ENCODE measurements at regions of chr7 and their contacts with region 1.

Region 1: GRCh38 chr7:131945313-131945911 is 389.0 kb upstream of the PODXL start:
- DNase-seq: peak; percentile 15
- ATAC-seq: peak; percentile 96
- H3K4me3 ChIP-seq: no peak overlapping the region
- H3K27ac ChIP-seq: no peak overlapping the region
- H3K4me1 ChIP-seq: peaks cover 0 to 10% of the 10 kb centered on the region in 2 experiments; a peak in 1 of 4 replicates
- H3K27me3 ChIP-seq: peaks cover 43% of the 10 kb centered on the region
- CTCF ChIP-seq: peak; percentile 82 to 84 (median 84)
- POLR2A ChIP-seq: no peak
- RAD21 ChIP-seq: peak; percentile 92

Region 2: DNA sequence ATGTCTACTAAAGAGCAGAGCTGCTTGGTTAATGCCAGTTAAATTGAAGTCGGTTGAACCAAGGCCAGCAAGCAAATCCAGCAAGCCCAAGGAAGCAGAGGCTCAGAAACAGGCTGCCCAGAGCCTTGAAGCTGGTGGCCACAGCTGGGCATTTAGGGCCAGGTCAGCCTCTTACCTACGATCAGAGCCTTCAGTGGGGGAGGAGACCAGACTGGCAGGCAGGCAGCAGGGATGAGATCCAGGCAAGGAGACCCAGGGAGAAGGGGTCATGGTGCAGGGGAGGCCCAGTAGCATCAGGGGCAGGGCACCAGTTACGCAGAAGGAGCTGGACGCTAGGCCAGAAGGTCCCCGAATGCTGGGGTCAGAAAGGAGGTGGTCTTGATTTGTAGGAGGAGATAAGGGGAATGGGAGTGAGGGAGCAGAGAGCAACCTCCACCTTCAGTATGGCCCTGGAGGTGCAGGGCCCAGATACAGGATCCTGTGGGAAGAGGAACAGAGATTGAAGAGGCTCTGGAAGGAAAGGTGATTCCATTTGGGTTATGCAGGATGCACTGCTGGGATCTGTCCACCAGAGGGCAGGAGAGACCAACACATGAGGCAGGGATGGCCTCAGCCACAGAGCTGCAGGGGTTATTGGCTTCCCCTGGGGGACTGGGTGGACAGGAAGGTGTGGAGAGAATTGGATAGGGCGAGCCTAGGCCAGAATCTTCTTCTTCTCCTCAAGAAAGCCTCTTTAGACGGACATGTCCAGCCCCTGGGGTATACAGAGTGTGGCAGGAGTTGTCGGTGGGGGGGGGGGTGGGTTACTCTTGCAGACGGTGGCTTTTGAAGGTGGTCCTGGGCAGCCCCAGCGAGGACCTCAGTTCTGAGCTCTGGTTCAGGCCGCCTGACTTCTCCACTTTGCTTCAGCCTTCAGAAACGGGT is 256.4 kb before region 1 on chr7:
- CTCF ChIA-PET with region 1: interaction called, 6 read pairs
- POLR2A ChIA-PET with region 1: no interaction called
- RAD21 ChIA-PET with region 1: no interaction called
- intact Hi-C with region 1: loop called (anchors 2 kb)
- DNase-seq: peak; percentile 23
- ATAC-seq: peak; percentile 79
- H3K4me3 ChIP-seq: no peak overlapping the region
- H3K27ac ChIP-seq: no peak overlapping the region
- H3K4me1 ChIP-seq: peaks cover 0 to 8% of the 10 kb centered on the region in 2 experiments; a peak in 3 of 4 replicates
- H3K27me3 ChIP-seq: peaks cover 34% of the 10 kb centered on the region
- CTCF ChIP-seq: peak; percentile 78 to 98 (median 93); a peak in 5 of 6 replicates
- POLR2A ChIP-seq: no peak
- RAD21 ChIP-seq: peak; percentile 94

Region 3: GRCh38 chr7:131764143-131764775 is 181.2 kb before region 1 on chr7:
- CTCF ChIA-PET with region 1: no interaction called
- POLR2A ChIA-PET with region 1: no interaction called
- RAD21 ChIA-PET with region 1: no interaction called
- intact Hi-C with region 1: no loop called
- DNase-seq: no peak
- ATAC-seq: no peak
- H3K4me3 ChIP-seq: no peak overlapping the region
- H3K27ac ChIP-seq: no peak overlapping the region
- H3K4me1 ChIP-seq: peaks cover 0 to 4% of the 10 kb centered on the region in 2 experiments; a peak in 2 of 4 replicates
- H3K27me3 ChIP-seq: peaks cover 59% of the 10 kb centered on the region
- CTCF ChIP-seq: no peak
- POLR2A ChIP-seq: no peak
- RAD21 ChIP-seq: no peak

Region 4: DNA sequence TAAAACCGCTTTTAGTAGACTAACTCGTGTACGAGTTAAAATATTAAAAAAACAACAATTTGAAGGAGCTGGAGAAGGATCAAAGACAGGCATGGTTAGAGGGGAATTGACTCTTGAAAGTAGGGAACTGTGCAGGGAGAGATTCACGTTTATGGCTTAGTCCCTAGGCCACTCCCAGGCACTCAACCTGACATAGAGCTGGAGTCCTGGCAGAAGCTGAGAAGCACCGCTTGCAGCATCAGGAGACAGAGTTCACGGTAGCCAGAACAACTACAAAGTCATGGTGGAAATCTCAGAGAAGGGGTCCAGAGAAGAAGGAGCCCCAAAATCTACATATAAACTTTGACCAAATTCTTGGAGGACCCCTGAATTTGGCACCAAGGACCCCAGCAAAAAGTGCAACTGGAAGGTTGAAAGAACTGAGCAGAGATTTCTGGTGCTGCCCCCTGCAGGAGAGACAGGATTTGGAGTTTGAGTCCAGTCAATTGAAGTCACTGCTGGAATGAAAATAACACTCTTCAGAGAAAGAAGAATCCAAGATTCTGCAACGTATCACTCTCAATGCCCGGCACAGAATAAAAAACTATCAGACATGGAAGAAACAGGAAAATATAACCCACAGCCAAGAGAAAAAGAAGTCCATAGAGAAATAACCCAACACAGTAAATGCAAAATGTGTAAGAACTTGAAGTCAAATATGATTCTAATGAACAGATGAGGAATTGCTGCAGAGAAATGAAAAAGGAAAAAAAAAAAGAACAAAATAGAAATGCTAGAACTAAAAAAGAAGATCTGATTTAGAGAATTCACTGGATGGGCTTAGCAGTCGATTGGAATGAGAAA is 104.3 kb after region 1 on chr7:
- CTCF ChIA-PET with region 1: interaction called, 6 read pairs
- POLR2A ChIA-PET with region 1: no interaction called
- RAD21 ChIA-PET with region 1: no interaction called
- intact Hi-C with region 1: loop called (anchors 2 kb)
- DNase-seq: peak; percentile 16
- ATAC-seq: peak; percentile 73
- H3K4me3 ChIP-seq: no peak overlapping the region
- H3K27ac ChIP-seq: no peak overlapping the region
- H3K4me1 ChIP-seq: no peaks in the 10 kb centered on the region
- H3K27me3 ChIP-seq: peaks cover 40% of the 10 kb centered on the region
- CTCF ChIP-seq: peak; percentile 50 to 78 (median 77); a peak in 5 of 6 replicates
- POLR2A ChIP-seq: no peak
- RAD21 ChIP-seq: peak; percentile 53; the same call in 1 of the 2 replicates

Region 5: GRCh38 chr7:132154248-132154647 is 208.8 kb after region 1 on chr7:
- CTCF ChIA-PET with region 1: interaction called, 4 read pairs
- POLR2A ChIA-PET with region 1: no interaction called
- RAD21 ChIA-PET with region 1: no interaction called
- intact Hi-C with region 1: loop called (anchors 2 kb)
- DNase-seq: no peak
- ATAC-seq: no peak
- H3K4me3 ChIP-seq: no peak overlapping the region
- H3K27ac ChIP-seq: no peak overlapping the region
- H3K4me1 ChIP-seq: no peaks in the 10 kb centered on the region
- H3K27me3 ChIP-seq: peaks cover 65% of the 10 kb centered on the region
- CTCF ChIP-seq: peak in 2 of 3 experiments; percentile 26 to 31; a peak in 3 of 6 replicates
- POLR2A ChIP-seq: no peak
- RAD21 ChIP-seq: peak; percentile 49

Region 6: GRCh38 chr7:132252793-132253100 is 307.3 kb after region 1 on chr7:
- CTCF ChIA-PET with region 1: interaction called, 6 read pairs
- POLR2A ChIA-PET with region 1: no interaction called
- RAD21 ChIA-PET with region 1: interaction called in 1 of 2 experiments, 3 read pairs
- intact Hi-C with region 1: loop called (anchors 1 kb)
- DNase-seq: no peak
- ATAC-seq: no peak
- H3K4me3 ChIP-seq: no peak overlapping the region
- H3K27ac ChIP-seq: no peak overlapping the region
- H3K4me1 ChIP-seq: no peaks in the 10 kb centered on the region
- H3K27me3 ChIP-seq: peaks cover 18% of the 10 kb centered on the region
- CTCF ChIP-seq: no peak
- POLR2A ChIP-seq: no peak
- RAD21 ChIP-seq: no peak

Region 7: GRCh38 chr7:132437730-132438129 is 492.3 kb after region 1 on chr7:
- CTCF ChIA-PET with region 1: no interaction called
- POLR2A ChIA-PET with region 1: no interaction called
- RAD21 ChIA-PET with region 1: no interaction called
- intact Hi-C with region 1: no loop called
- DNase-seq: no peak
- ATAC-seq: no peak
- H3K4me3 ChIP-seq: no peak overlapping the region
- H3K27ac ChIP-seq: no peak overlapping the region
- H3K4me1 ChIP-seq: no peaks in the 10 kb centered on the region
- H3K27me3 ChIP-seq: peaks cover 74% of the 10 kb centered on the region
- CTCF ChIP-seq: no peak
- POLR2A ChIP-seq: no peak
- RAD21 ChIP-seq: no peak

Region 8: DNA sequence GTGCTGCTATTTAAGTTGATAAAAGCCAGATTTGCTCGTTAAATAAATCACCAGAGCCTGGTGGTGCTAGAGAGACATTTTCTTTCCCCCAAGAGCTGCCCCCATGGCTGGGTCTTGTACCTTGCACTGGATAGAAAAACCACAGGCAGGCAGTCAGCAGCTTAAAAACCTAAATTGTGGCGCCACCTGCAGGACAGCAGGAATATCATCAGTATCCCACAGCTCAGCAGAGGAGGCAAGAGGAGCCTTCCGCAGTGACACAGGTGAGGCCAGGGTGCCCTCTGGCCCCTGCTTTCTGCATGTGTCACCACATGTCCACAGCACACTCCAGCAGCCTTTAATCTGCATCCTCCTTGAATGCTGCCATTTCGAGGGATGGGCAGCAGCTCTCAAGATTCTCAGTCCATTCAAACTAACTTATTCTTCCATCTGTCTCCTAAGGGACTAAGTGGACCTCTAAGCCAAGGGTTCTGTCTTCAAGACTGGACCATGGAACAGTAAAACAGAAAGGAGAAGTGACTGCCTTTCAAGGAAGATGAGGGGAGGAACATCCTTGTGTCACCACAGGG is 635.4 kb after region 1 on chr7:
- CTCF ChIA-PET with region 1: interaction called, 9 read pairs
- POLR2A ChIA-PET with region 1: no interaction called
- RAD21 ChIA-PET with region 1: no interaction called
- intact Hi-C with region 1: loop called (anchors 1 kb)
- DNase-seq: peak; percentile 62
- ATAC-seq: peak; percentile 97
- H3K4me3 ChIP-seq: no peak overlapping the region
- H3K27ac ChIP-seq: no peak overlapping the region
- H3K4me1 ChIP-seq: no peaks in the 10 kb centered on the region
- H3K27me3 ChIP-seq: peaks cover 17% of the 10 kb centered on the region; the same call in 1 of the 2 replicates
- CTCF ChIP-seq: peak; percentile 70 to 90 (median 80)
- POLR2A ChIP-seq: no peak
- RAD21 ChIP-seq: peak; percentile 86